Activated naive CD4-positive, alpha-beta T cell treated with anti-CD3 and anti-CD28 coated beads, Interleukin-2, amount 10 ng/mL, durations not matched to agents 7 days and 5 days (primary cell): ENCODE measurements at regions of chr2 and their contacts with region 1.

Region 1: GRCh38 chr2:204177977-204178540 is 241.5 kb downstream of the ICOS start:
- DNase-seq: peak; percentile 79
- H3K4me3 Mint-ChIP-seq: no peak overlapping the region
- H3K27ac Mint-ChIP-seq: no peak overlapping the region
- H3K4me1 Mint-ChIP-seq: peaks cover 3% of the 10 kb centered on the region
- H3K27me3 Mint-ChIP-seq: peaks cover 20% of the 10 kb centered on the region

Region 2: GRCh38 chr2:203782262-203782976 is 395.6 kb before region 1 on chr2:
- CTCF ChIA-PET with region 1: no interaction called
- DNase-seq: peak; percentile 69
- H3K4me3 Mint-ChIP-seq: no peak overlapping the region
- H3K27ac Mint-ChIP-seq: no peak overlapping the region
- H3K4me1 Mint-ChIP-seq: peaks cover 47% of the 10 kb centered on the region
- H3K27me3 Mint-ChIP-seq: no peaks in the 10 kb centered on the region

Region 3: GRCh38 chr2:204024503-204024902 is 153.6 kb before region 1 on chr2:
- CTCF ChIA-PET with region 1: interaction called, 15 read pairs
- DNase-seq: peak; percentile 46
- H3K4me3 Mint-ChIP-seq: no peak overlapping the region
- H3K27ac Mint-ChIP-seq: no peak overlapping the region
- H3K4me1 Mint-ChIP-seq: peaks cover 49% of the 10 kb centered on the region
- H3K27me3 Mint-ChIP-seq: no peaks in the 10 kb centered on the region

Region 4: DNA sequence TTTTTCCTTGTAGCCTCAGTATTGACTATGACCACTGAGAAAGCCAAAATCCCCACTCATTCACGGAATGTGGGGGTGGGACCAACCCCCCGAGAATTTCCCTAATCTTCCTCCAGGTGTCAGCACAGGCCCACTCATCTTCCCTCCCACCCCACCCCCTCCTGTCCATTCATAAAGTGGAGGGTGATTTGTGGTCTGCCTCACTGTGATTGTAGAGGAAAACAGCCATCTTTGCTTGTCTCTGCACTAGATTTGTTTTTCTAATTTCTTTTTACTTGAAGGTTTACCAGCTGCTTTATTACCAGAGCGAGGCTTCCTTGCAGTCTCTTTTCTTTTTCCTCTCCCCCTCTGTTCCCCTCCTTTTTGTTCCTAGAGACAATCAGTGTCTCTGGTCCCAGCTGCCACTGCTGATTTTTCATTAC is 69.7 kb before region 1 on chr2:
- CTCF ChIA-PET with region 1: interaction called, 50 read pairs
- DNase-seq: peak; percentile 57
- H3K4me3 Mint-ChIP-seq: peak overlapping the region; percentile 59
- H3K27ac Mint-ChIP-seq: peak overlapping the region; percentile 84
- H3K4me1 Mint-ChIP-seq: peaks cover 78% of the 10 kb centered on the region
- H3K27me3 Mint-ChIP-seq: peaks cover 9% of the 10 kb centered on the region

Region 5: DNA sequence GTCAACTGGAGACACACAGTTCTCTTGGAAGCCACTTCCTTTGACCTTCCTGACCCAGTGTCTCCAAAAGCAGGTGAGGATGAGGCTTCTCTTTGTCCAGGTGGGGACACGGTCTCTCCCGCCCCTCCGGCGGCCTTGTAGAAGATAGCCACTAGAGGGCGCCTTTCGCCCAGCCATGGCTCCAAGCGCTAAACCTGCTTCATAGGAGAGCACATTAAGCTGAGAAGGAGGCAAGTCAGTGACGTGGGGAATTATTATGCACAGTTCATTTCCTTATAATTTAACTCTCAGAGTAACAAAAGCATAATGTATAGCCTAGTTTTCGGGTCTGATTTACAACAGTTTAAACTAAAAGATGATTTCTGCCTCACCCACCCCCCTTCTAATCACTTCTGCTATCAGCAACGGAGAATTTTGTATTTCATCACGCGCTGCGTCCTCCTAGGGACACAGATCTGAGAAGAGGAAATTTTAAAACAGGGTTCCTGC is 32.8 kb before region 1 on chr2:
- CTCF ChIA-PET with region 1: interaction called, 35 read pairs
- DNase-seq: peak; percentile 84
- H3K4me3 Mint-ChIP-seq: peak overlapping the region; percentile 75
- H3K27ac Mint-ChIP-seq: peak overlapping the region; percentile 77
- H3K4me1 Mint-ChIP-seq: peaks cover 12% of the 10 kb centered on the region
- H3K27me3 Mint-ChIP-seq: peaks cover 26% of the 10 kb centered on the region

Region 6: GRCh38 chr2:204166961-204167360 is 11.1 kb before region 1 on chr2:
- CTCF ChIA-PET with region 1: interaction called, 11 read pairs
- DNase-seq: no peak
- H3K4me3 Mint-ChIP-seq: no peak overlapping the region
- H3K27ac Mint-ChIP-seq: no peak overlapping the region
- H3K4me1 Mint-ChIP-seq: no peaks in the 10 kb centered on the region
- H3K27me3 Mint-ChIP-seq: peaks cover 10% of the 10 kb centered on the region